Aorta (tissue), 5 donors: ENCODE measurements at regions of chr14 and their contacts with region 1.

Region 1: DNA sequence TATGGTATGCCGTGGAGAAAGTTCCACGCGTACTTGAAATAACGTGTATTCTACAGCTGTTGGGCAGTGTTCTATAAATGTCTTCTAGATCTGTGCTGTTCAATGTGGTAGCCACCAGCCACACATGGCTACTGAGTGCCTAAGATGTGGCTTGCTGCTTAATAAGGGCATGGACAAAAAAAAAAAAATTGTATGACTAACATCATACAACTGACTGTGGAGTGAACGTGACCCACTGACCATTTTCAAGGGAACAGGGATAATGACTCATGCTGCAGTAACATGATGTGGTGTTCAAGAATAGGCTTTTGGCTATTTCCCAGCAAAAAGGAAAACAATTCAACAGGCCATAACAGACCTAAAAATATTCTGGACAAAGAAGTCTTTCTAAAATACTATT is 13.0 kb downstream of the ATG14 start:
- DNase-seq: no peak
- ATAC-seq: peak; percentile 92
- H3K4me3 ChIP-seq: no peak overlapping the region
- H3K27ac ChIP-seq: peak overlapping the region; percentile 51 to 89
- H3K4me1 ChIP-seq: peaks cover 0 to 3% of the 10 kb centered on the region in 2 donors
- H3K27me3 ChIP-seq: no peaks in the 10 kb centered on the region

Region 2: GRCh38 chr14:55383039-55383438 is 15.6 kb before region 1 on chr14:
- intact Hi-C with region 1: loop called (anchors 1 to 2 kb)
- DNase-seq: peak in 1 of 2 donors; percentile 57
- ATAC-seq: peak; percentile 61
- H3K4me3 ChIP-seq: no peak overlapping the region
- H3K27ac ChIP-seq: peak overlapping the region in 1 of 2 donors; percentile 71
- H3K4me1 ChIP-seq: peaks cover 4 to 11% of the 10 kb centered on the region in 2 donors
- H3K27me3 ChIP-seq: no peaks in the 10 kb centered on the region

Region 3: DNA sequence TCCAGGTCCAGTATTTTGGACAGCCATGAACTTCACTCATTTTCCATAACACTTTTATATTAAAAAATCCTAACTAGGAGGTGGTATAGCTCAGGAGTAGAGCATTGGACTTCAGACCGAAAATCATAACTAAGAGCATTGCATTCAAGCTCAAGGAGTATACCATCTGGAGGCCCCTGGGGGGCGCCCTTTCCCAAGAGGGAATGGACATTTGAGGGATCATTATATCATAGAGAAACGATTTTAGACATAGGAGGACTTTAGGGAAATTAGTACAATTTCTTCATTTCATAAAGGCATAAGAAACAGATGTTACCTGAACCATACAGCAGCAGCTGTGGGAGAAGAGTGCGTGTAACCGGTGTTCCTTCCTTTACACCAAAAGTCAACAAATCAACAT is 18.2 kb after region 1 on chr14:
- intact Hi-C with region 1: no loop called
- DNase-seq: no peak
- ATAC-seq: no peak
- H3K4me3 ChIP-seq: no peak overlapping the region
- H3K27ac ChIP-seq: no peak overlapping the region
- H3K4me1 ChIP-seq: no peaks in the 10 kb centered on the region
- H3K27me3 ChIP-seq: no peaks in the 10 kb centered on the region